Colonic mucosa (tissue), 4 donors: ENCODE measurements at regions of chr11 and their contacts with region 1.

Region 1: DNA sequence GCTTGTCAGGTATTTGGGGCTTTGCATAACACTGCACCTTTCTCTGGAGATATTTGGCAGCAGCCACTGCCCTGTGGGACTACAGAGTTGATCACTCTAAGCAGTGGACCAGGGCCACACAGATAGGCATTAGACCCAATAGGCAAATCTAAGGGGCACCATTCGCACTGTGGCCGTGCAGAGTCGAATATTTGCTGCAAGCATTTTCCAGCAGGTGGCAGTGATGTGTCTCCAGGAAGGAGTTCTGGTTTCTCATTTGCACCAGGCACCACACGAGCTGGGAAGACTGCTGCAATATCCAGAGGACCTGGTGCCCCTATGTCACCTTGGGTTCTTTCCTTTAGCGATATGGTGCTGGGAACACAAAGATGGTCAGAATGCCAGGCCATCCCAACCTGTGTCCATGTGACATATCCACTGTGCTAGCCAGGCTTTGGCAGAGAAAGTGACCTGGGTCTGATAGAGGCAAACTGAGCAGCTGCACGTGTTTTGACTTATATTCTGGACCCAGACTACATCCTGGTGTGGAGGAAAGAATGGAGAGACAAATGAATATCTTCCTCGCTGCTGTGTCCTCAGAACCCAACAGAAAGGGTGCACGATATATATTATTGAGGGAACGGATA is 318.7 kb downstream of the BUD13 start:
- DNase-seq: peak; percentile 69
- H3K4me3 ChIP-seq: no peak overlapping the region
- H3K27ac ChIP-seq: no peak overlapping the region
- H3K4me1 ChIP-seq: peaks cover 7% of the 10 kb centered on the region
- H3K27me3 ChIP-seq: no peaks in the 10 kb centered on the region
- CTCF ChIP-seq: peak; percentile 64

Region 2: GRCh38 chr11:116499396-116500003 is 45.4 kb after region 1 on chr11:
- intact Hi-C with region 1: loop called (anchors 2 kb)
- DNase-seq: peak; percentile 88
- H3K4me3 ChIP-seq: no peak overlapping the region
- H3K27ac ChIP-seq: no peak overlapping the region
- H3K4me1 ChIP-seq: no peaks in the 10 kb centered on the region
- H3K27me3 ChIP-seq: no peaks in the 10 kb centered on the region
- CTCF ChIP-seq: peak; percentile 60

Region 3: DNA sequence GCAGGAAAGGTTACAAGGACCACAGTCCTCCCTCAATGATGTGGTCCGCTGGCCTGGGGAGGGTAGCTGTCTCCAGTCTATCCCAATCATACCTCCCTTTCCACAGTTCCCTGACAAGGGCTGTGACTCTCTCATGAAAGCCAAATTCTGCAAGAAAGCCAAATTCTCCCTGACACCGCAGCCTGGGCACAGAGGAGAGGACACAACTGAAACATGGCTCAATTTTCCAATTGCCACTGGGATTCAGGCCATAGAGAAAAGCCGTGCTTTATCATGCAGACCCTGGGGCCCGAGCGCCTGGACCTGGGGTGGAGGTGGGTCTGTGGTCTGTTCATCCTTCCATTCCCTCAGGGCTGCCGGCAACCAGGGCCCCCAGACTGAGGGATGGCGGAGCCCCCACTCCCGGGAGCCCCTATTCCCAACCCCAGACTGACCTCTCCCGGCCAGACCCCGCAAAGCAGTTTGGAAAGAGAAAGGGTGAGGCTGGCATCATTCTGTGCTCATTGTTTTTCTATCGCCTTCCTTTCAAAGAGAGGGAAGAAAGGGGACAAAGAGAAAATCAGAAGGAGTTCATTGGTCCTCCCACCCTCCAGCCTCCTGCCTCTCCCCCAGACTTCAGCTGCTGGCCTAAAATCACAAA is 79.2 kb after region 1 on chr11:
- intact Hi-C with region 1: no loop called
- DNase-seq: no peak
- H3K4me3 ChIP-seq: no peak overlapping the region
- H3K27ac ChIP-seq: no peak overlapping the region
- H3K4me1 ChIP-seq: no peaks in the 10 kb centered on the region
- H3K27me3 ChIP-seq: peaks cover 4% of the 10 kb centered on the region
- CTCF ChIP-seq: no peak

Region 4: GRCh38 chr11:116605543-116606459 is 151.7 kb after region 1 on chr11:
- intact Hi-C with region 1: no loop called
- DNase-seq: peak; percentile 46
- H3K4me3 ChIP-seq: no peak overlapping the region
- H3K27ac ChIP-seq: no peak overlapping the region
- H3K4me1 ChIP-seq: no peaks in the 10 kb centered on the region
- H3K27me3 ChIP-seq: no peaks in the 10 kb centered on the region
- CTCF ChIP-seq: no peak

Region 5: GRCh38 chr11:116687458-116688201 is 233.5 kb after region 1 on chr11:
- intact Hi-C with region 1: loop called (anchors 10 kb)
- DNase-seq: no peak
- H3K4me3 ChIP-seq: no peak overlapping the region
- H3K27ac ChIP-seq: no peak overlapping the region
- H3K4me1 ChIP-seq: no peaks in the 10 kb centered on the region
- H3K27me3 ChIP-seq: no peaks in the 10 kb centered on the region
- CTCF ChIP-seq: no peak